Activated naive CD4-positive, alpha-beta T cell treated with anti-CD3 and anti-CD28 coated beads, Interleukin-2, amount 10 ng/mL, durations not matched to agents 7 days and 5 days (primary cell): ENCODE measurements at regions of chr1 and their contacts with region 1.

Region 1: DNA sequence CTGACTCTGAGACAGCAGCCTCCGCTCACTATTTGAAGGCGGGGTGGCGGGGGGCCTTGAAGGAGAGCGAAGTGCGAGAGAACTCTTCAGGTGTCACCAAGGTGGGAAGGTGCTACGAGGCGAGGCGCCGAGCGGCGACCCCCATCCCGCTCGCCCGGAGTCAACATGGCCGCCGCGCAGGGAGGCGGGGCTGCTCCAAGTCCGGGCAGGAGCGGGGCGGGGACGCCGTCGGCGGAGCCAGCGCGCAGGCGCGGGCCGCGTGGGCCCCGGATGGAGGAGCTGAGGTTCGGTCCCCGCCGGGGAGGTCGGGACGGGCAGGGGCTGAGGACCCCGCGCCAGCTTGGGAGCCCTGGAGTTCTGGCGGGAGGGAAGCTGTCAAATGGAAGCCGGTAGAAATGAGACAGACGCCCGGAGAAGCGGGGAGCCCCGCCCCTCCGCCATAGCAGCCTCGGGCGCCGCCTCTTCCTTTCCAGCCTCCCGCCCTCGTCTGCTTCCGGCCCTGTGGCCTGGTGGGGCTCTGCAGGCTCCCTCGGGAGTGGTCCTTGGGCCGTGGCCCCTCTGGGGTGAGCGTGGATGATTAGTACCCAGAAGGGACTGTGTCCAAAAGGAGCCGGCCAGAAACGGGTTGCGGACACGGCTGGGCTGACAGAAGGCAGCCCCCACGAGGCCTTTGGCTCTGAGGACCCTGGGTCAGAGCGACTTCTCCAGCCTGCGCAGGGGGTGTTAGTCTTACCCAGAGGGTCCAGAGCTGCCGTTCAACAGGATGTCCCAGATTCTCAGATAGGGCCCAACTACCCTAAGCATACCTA is at the start of gene PIGV:
- DNase-seq: peak; percentile 89
- H3K4me3 Mint-ChIP-seq: peak within 1 kb of the TSS; percentile 78
- H3K27ac Mint-ChIP-seq: peak within 1 kb of the TSS; percentile 100
- H3K4me1 Mint-ChIP-seq: peaks cover 76% of the 10 kb centered on the region
- H3K27me3 Mint-ChIP-seq: peaks cover 4% of the 10 kb centered on the region

Region 2: GRCh38 chr1:26541816-26542711 is 245.8 kb before region 1 on chr1:
- CTCF ChIA-PET with region 1: interaction called, 10 read pairs
- DNase-seq: peak; percentile 87
- H3K4me3 Mint-ChIP-seq: peak overlapping the region; percentile 68
- H3K27ac Mint-ChIP-seq: peak overlapping the region; percentile 91
- H3K4me1 Mint-ChIP-seq: peaks cover 93% of the 10 kb centered on the region
- H3K27me3 Mint-ChIP-seq: no peaks in the 10 kb centered on the region

Region 3: GRCh38 chr1:26608895-26609294 is 179.0 kb before region 1 on chr1:
- CTCF ChIA-PET with region 1: interaction called, 211 read pairs
- DNase-seq: no peak
- H3K4me3 Mint-ChIP-seq: no peak overlapping the region
- H3K27ac Mint-ChIP-seq: no peak overlapping the region
- H3K4me1 Mint-ChIP-seq: no peaks in the 10 kb centered on the region
- H3K27me3 Mint-ChIP-seq: peaks cover 42% of the 10 kb centered on the region

Region 4: GRCh38 chr1:26692793-26693490 is 95.0 kb before region 1 on chr1:
- CTCF ChIA-PET with region 1: interaction called, 41 read pairs
- DNase-seq: peak; percentile 96
- H3K4me3 Mint-ChIP-seq: peak overlapping the region; percentile 87
- H3K27ac Mint-ChIP-seq: peak overlapping the region; percentile 97
- H3K4me1 Mint-ChIP-seq: peaks cover 29% of the 10 kb centered on the region
- H3K27me3 Mint-ChIP-seq: peaks cover 4% of the 10 kb centered on the region

Region 5: GRCh38 chr1:26772687-26773086 is 15.2 kb before region 1 on chr1:
- CTCF ChIA-PET with region 1: no interaction called
- DNase-seq: no peak
- H3K4me3 Mint-ChIP-seq: no peak overlapping the region
- H3K27ac Mint-ChIP-seq: no peak overlapping the region
- H3K4me1 Mint-ChIP-seq: peaks cover 9% of the 10 kb centered on the region
- H3K27me3 Mint-ChIP-seq: no peaks in the 10 kb centered on the region

Region 6: DNA sequence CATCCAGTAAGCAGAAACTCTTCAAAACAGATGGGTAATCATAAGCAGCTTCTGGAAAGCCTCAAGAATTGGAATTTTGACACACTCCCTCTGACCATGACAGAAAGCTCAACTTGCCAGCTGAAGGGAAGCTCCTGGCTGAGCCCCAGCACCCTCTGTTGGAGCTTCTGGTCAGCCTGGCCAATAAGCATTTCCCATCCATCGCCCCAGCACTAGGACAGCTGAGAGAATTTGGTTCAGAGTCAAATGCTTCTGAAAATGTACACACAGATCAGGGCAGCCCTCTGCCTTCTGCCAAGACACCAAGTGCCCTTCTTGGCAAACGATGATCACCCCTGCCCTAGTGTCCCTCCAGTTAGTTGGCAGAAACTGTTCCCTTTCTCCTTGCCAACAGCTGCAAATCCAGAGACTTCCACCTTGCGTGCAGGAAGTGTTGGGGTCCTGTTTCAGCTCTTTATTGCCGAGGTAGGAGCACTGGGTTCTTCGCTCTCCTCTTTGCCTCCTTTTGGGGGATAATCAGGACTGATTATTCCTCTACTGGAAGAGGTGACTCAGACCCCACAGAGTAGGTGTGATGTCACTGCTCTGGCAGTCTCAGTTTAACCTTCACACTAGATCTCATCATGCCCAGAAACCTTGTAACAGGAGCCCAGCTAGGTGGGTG is 11.7 kb after region 1 on chr1:
- CTCF ChIA-PET with region 1: interaction called, 49 read pairs
- DNase-seq: peak; percentile 31
- H3K4me3 Mint-ChIP-seq: peak overlapping the region; percentile 46
- H3K27ac Mint-ChIP-seq: peak overlapping the region; percentile 94
- H3K4me1 Mint-ChIP-seq: peaks cover 58% of the 10 kb centered on the region
- H3K27me3 Mint-ChIP-seq: no peaks in the 10 kb centered on the region

Region 7: DNA sequence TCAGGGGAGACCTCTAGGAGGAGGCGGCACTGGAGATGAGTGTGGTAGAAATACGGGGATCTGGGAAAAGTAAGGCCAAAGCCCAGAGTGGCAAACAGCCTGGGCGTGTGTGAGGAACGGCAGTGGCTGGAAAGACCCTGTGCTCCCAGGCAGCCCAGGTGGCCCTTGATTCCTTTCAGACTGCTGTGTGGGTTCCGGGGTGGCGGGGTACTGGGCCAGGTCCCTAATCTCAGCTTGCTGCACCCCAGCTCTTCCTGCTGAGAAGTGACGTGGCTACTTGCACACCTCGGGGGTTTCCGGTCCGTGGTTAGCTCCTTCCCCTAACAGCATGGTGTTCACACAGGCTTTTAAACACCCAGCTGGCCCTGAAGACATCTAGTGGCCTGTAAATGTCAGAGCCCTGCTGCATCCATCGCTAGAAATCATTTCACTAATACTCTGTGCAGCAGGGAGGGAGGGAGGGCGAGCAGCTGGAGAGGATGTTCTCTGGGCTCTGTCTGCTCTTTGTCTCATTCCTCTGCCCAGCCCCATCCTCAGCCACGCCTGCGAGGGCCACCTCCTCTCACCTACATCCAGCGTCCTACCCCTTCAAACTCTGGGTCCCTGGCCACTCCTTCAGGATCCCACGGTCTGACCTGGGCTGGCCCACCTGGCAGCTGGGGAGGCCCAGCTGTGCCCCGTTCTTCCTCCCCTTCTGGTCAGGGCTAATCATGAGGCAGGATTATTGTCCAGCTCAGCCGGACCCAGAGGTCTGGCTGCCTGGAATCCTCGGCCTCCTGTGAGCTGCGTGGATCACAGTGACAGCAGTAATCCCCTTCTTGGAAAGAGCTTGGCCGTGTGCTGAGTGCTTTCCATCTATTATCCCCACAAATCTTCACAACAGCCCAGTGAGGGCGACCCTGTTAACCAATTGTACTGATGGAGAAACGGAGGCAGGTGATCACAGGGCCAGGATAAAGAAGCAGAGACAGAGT is 45.8 kb after region 1 on chr1:
- CTCF ChIA-PET with region 1: interaction called, 28 read pairs
- DNase-seq: peak; percentile 96
- H3K4me3 Mint-ChIP-seq: peak overlapping the region; percentile 61
- H3K27ac Mint-ChIP-seq: peak overlapping the region; percentile 97
- H3K4me1 Mint-ChIP-seq: peaks cover 70% of the 10 kb centered on the region
- H3K27me3 Mint-ChIP-seq: no peaks in the 10 kb centered on the region